GM12878 (cell line): ENCODE measurements at regions of chr12 and their contacts with region 1.

Region 1: DNA sequence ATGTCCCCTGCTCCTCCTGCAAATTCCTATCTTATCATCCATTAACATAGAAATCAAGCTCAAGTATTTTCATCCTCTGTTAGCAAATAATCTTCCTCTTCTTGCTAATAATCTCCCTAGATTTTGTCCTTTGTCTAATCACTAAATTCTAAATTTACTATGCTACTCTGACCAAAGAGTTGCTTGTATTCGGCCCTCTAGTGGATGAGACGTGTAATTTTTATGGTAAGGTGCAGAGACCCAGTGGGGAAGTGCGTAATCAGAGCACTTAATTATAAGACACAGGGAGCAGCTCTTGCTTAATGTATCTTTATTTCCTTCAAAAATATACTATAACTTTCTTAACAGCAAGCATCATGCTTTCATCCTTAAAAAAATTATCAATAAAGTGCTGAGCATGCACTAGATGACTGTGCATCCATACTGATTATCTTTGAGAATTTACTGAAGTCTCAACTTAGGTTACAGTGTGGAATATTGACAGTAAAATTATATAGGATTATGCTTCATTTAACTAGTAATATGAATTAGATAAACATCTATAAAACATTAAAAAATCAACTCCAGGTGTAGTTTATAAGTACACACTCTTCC is 212.6 kb downstream of the SLC16A7 start:
- DNase-seq: no peak
- ATAC-seq: peak; percentile 94
- H3K4me3 ChIP-seq: no peak overlapping the region
- H3K27ac ChIP-seq: no peak overlapping the region
- H3K4me1 ChIP-seq: no peaks in the 10 kb centered on the region
- H3K27me3 ChIP-seq: no peaks in the 10 kb centered on the region
- CTCF ChIP-seq: peak; percentile 48 to 70 (median 69)
- EP300 ChIP-seq: no peak
- POLR2A ChIP-seq: no peak
- RAD21 ChIP-seq: peak; percentile 77

Region 2: GRCh38 chr12:59587710-59588109 is 220.7 kb before region 1 on chr12:
- CTCF ChIA-PET with region 1: interaction called, 3 read pairs
- POLR2A ChIA-PET with region 1: no interaction called
- RAD21 ChIA-PET with region 1: no interaction called
- SMC1A ChIA-PET with region 1: interaction called, 3 read pairs
- in situ Hi-C with region 1: no loop called
- intact Hi-C with region 1: loop called (anchors 5 kb)
- DNase-seq: no peak
- ATAC-seq: no peak
- H3K4me3 ChIP-seq: no peak overlapping the region
- H3K27ac ChIP-seq: no peak overlapping the region
- H3K4me1 ChIP-seq: no peaks in the 10 kb centered on the region
- H3K27me3 ChIP-seq: no peaks in the 10 kb centered on the region
- CTCF ChIP-seq: peak in 1 of 3 experiments; percentile 20; a peak in 2 of 6 replicates
- EP300 ChIP-seq: no peak
- POLR2A ChIP-seq: no peak
- RAD21 ChIP-seq: peak; percentile 50; the same call in 1 of the 2 replicates

Region 3: GRCh38 chr12:59742841-59743240 is 65.6 kb before region 1 on chr12:
- CTCF ChIA-PET with region 1: no interaction called
- POLR2A ChIA-PET with region 1: no interaction called
- RAD21 ChIA-PET with region 1: no interaction called
- SMC1A ChIA-PET with region 1: no interaction called
- in situ Hi-C with region 1: no loop called
- intact Hi-C with region 1: no loop called
- DNase-seq: no peak
- ATAC-seq: no peak
- H3K4me3 ChIP-seq: no peak overlapping the region
- H3K27ac ChIP-seq: no peak overlapping the region
- H3K4me1 ChIP-seq: no peaks in the 10 kb centered on the region
- H3K27me3 ChIP-seq: no peaks in the 10 kb centered on the region
- CTCF ChIP-seq: no peak
- EP300 ChIP-seq: no peak
- POLR2A ChIP-seq: no peak
- RAD21 ChIP-seq: no peak